AG04450 (cell line): ENCODE measurements at regions of chr20 and their contacts with region 1.

Region 1: GRCh38 chr20:6767536-6768227 is at the start of gene BMP2:
- DNase-seq: no peak
- H3K4me3 ChIP-seq: peak within 1 kb of the TSS; percentile 64
- H3K27ac ChIP-seq: no peak within 1 kb of the TSS
- H3K27me3 ChIP-seq: peaks cover 22% of the 10 kb centered on the region
- CTCF ChIP-seq: no peak
- polyA plus RNA-seq, gene BMP2: 1.6 and 1.8 TPM in 2 replicates

Region 2: DNA sequence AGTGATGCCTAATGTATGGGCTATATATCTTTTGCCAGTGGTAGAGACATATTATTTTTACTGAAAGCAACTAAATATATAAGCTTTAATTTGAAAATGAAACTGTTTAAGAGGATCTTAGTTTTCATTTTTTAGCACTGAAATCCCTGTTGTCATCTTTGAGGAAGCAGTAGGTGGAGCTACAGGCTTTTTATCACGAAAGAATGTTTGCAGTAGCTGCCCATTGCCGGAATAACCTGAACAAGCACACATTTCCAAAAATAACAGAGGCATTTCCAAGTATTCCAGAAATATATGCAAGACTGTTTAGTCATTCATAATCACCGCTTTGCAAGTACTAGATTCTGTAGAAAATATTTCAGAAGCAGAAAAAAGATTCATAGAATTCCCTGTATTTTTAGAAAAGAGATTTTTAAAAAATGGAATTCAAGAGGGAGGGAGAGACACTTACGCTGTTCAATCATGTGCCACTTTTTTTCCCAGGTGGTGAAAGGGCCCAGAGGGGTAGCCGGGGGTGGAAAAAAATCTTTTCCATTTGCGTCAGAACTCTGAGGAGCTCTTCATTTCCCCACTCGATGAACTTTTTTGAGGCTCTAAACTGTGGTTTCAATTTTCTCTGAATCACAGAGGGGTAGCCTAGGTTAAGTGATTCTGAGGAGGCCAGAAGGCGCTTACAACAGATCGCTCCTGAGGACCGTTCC is 502.3 kb before region 1 on chr20:
- CTCF ChIA-PET with region 1: interaction called, 25 read pairs
- POLR2A ChIA-PET with region 1: no interaction called
- DNase-seq: peak; percentile 38
- H3K4me3 ChIP-seq: peak overlapping the region; percentile 25; the same call in 1 of the 2 replicates
- H3K27ac ChIP-seq: no peak overlapping the region
- H3K27me3 ChIP-seq: no peaks in the 10 kb centered on the region
- CTCF ChIP-seq: peak; percentile 60

Region 3: GRCh38 chr20:6750438-6750837 is 17.2 kb before region 1 on chr20:
- CTCF ChIA-PET with region 1: interaction called, 14 read pairs
- POLR2A ChIA-PET with region 1: no interaction called
- DNase-seq: no peak
- H3K4me3 ChIP-seq: no peak overlapping the region
- H3K27ac ChIP-seq: no peak overlapping the region
- H3K27me3 ChIP-seq: no peaks in the 10 kb centered on the region
- CTCF ChIP-seq: no peak

Region 4: GRCh38 chr20:6784210-6784611 is 16.5 kb after region 1 on chr20:
- CTCF ChIA-PET with region 1: interaction called, 16 read pairs
- POLR2A ChIA-PET with region 1: no interaction called
- DNase-seq: no peak
- H3K4me3 ChIP-seq: no peak overlapping the region
- H3K27ac ChIP-seq: no peak overlapping the region
- H3K27me3 ChIP-seq: no peaks in the 10 kb centered on the region
- CTCF ChIP-seq: no peak

Region 5: GRCh38 chr20:7859356-7859802 is 1091.7 kb after region 1 on chr20:
- CTCF ChIA-PET with region 1: interaction called, 16 read pairs
- POLR2A ChIA-PET with region 1: no interaction called
- DNase-seq: no peak
- H3K4me3 ChIP-seq: no peak overlapping the region
- H3K27ac ChIP-seq: no peak overlapping the region
- H3K27me3 ChIP-seq: no peaks in the 10 kb centered on the region
- CTCF ChIP-seq: peak; percentile 78